ENCODE measurements at regions of chr3 and their contacts with region 1.

Region 1: GRCh38 chr3:149512209-149512782 is 37.8 kb downstream of the TM4SF4 start:
- DNase-seq: peak; percentile 72
- ATAC-seq: peak; percentile 80
- H3K4me3 ChIP-seq: no peak overlapping the region
- H3K27ac ChIP-seq: no peak overlapping the region
- H3K4me1 ChIP-seq: peaks cover 8% of the 10 kb centered on the region
- H3K27me3 ChIP-seq: no peaks in the 10 kb centered on the region
- CTCF ChIP-seq: peak; percentile 88
- POLR2A ChIP-seq: no peak
- RAD21 ChIP-seq: peak; percentile 84

Region 2: GRCh38 chr3:149726716-149727407 is 214.6 kb after region 1 on chr3:
- CTCF ChIA-PET with region 1: interaction called, 3 read pairs
- POLR2A ChIA-PET with region 1: no interaction called
- dilution Hi-C with region 1: loop called (anchors 25 kb)
- in situ Hi-C with region 1: no loop called
- intact Hi-C with region 1: no loop called
- DNase-seq: peak; percentile 10
- ATAC-seq: no peak; the same call in 1 of the 2 replicates
- H3K4me3 ChIP-seq: no peak overlapping the region
- H3K27ac ChIP-seq: no peak overlapping the region
- H3K4me1 ChIP-seq: no peaks in the 10 kb centered on the region
- H3K27me3 ChIP-seq: peaks cover 1% of the 10 kb centered on the region; the same call in 1 of the 2 replicates
- CTCF ChIP-seq: no peak
- POLR2A ChIP-seq: no peak
- RAD21 ChIP-seq: no peak

Region 3: GRCh38 chr3:149752051-149752787 is 239.9 kb after region 1 on chr3 and contains the start of gene COMMD2:
- CTCF ChIA-PET with region 1: interaction called, 3 read pairs
- POLR2A ChIA-PET with region 1: no interaction called
- dilution Hi-C with region 1: loop called (anchors 25 kb)
- in situ Hi-C with region 1: no loop called
- intact Hi-C with region 1: loop called (anchors 1 kb)
- DNase-seq: peak; percentile 85
- ATAC-seq: peak; percentile 99
- H3K4me3 ChIP-seq: peak within 1 kb of the TSS; percentile 66
- H3K27ac ChIP-seq: peak within 1 kb of the TSS; percentile 48
- H3K4me1 ChIP-seq: 0 out of 2 replicates have a peak, but pooled peaks cover 2% of the 10 kb centered on the region
- H3K27me3 ChIP-seq: peaks cover 2% of the 10 kb centered on the region; the same call in 1 of the 2 replicates
- CTCF ChIP-seq: peak; percentile 31
- POLR2A ChIP-seq: no peak
- RAD21 ChIP-seq: peak; percentile 42; the same call in 1 of the 2 replicates
- total RNA-seq, gene COMMD2: 31.9 and 46.1 TPM in 2 replicates

Region 4: GRCh38 chr3:150062492-150062891 is 550.2 kb after region 1 on chr3:
- CTCF ChIA-PET with region 1: no interaction called
- POLR2A ChIA-PET with region 1: no interaction called
- dilution Hi-C with region 1: no loop called
- in situ Hi-C with region 1: no loop called
- intact Hi-C with region 1: no loop called
- DNase-seq: peak; percentile 81
- ATAC-seq: peak; percentile 93
- H3K4me3 ChIP-seq: peak overlapping the region; percentile 35
- H3K27ac ChIP-seq: peak overlapping the region; percentile 96
- H3K4me1 ChIP-seq: peaks cover 10% of the 10 kb centered on the region
- H3K27me3 ChIP-seq: no peaks in the 10 kb centered on the region
- CTCF ChIP-seq: no peak
- POLR2A ChIP-seq: no peak
- RAD21 ChIP-seq: no peak

Measured in IMR-90 (cell line).